PC-9 (cell line): ENCODE measurements at regions of chr2 and their contacts with region 1.

Region 1: GRCh38 chr2:66574701-66575624 is 140.0 kb downstream of the MEIS1 start:
- DNase-seq: peak; percentile 41 to 56
- H3K4me3 ChIP-seq: peak overlapping the region; percentile 65; the same call in 1 of the 2 replicates
- H3K27ac ChIP-seq: no peak overlapping the region
- H3K4me1 ChIP-seq: 0 out of 2 replicates have a peak, but pooled peaks cover 19% of the 10 kb centered on the region
- H3K27me3 ChIP-seq: peaks cover 27% of the 10 kb centered on the region; the same call in 1 of the 2 replicates
- CTCF ChIP-seq: peak; percentile 78

Region 2: GRCh38 chr2:65639156-65639864 is 935.7 kb before region 1 on chr2:
- CTCF ChIA-PET with region 1: no interaction called
- POLR2A ChIA-PET with region 1: no interaction called
- intact Hi-C with region 1: loop called (anchors 2 kb)
- DNase-seq: no peak
- H3K4me3 ChIP-seq: no peak overlapping the region
- H3K27ac ChIP-seq: no peak overlapping the region
- H3K4me1 ChIP-seq: no peaks in the 10 kb centered on the region
- H3K27me3 ChIP-seq: no peaks in the 10 kb centered on the region
- CTCF ChIP-seq: no peak

Region 3: DNA sequence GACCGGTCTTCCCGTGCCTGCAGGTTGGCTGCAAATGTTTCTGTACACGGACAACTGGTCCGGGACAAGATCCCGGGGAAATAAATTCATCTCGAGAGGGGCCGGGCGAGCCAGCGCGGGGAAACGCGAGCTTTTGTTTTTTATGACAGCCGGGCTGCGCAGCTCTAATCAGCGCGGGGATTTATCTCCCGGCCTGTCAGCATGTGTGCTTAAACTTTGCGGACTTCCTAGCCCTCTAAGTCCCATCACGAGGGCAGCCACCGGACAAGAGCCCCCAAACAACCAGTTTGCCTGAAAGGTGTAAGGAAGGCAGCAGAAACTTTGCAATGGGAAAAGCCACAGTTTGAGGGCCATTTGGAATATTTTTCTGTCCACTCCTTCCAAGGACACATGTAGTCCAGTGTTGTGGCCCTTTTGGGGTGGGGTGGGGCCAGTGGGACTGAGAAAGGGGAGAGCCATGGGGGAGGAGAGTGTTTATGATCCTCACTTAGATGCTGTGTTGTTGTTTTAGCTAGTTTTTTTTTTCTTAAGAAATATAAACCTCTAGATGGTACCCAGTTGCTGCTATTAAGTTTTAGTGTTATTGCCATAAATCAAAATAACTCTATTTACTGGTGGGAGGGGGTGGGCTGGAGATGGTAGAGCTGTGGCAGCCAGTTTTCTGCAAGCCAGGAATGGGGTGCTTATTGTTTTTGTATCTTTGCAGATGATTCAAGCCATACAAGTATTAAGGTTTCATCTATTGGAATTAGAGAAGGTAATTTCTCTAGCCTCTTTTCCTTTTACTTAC is 134.1 kb before region 1 on chr2:
- CTCF ChIA-PET with region 1: interaction called, 12 read pairs
- POLR2A ChIA-PET with region 1: no interaction called
- intact Hi-C with region 1: no loop called
- DNase-seq: no peak
- H3K4me3 ChIP-seq: no peak overlapping the region
- H3K27ac ChIP-seq: no peak overlapping the region
- H3K4me1 ChIP-seq: peaks cover 13% of the 10 kb centered on the region
- H3K27me3 ChIP-seq: no peaks in the 10 kb centered on the region
- CTCF ChIP-seq: no peak

Region 4: DNA sequence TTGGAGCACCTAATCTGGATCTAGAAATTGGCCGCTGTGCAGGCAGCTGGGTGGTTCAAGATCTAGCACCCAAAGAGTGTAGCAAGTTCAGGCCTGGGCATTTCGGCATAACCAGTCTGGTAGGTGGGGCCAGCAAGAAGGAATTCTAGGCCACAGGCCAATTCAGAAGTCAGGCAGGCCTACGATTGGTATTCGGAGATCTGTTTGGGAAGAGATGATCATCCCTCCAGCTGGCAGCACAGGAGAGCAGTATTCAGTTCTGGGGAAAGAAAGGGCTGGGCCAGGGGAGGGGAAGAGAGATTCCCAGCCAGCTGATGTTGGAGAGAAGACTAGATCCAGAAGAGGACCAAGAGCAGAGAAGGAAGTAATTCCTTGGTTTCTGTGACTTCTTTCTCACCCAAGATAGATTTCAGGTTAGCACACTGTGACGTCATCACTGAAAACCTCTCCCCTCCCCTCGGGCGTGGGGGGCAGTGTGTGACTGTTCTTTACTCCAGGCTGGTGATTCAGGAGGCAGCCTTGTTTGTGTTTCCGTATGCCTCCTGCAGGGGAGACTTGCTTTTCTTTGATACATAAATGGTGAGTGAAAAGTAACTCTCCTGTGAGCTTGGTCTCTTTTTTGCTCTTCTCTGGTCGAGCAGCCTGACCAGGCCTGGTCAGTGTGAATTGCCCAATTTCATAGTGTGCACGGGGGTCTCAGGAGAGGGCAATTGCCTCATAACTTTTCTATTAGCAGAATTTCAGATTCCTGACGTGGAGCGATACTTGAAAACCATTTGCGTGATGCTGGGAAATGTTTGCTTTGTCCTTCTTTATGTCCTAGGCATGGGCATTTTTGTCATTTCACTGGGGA is 78.9 kb before region 1 on chr2:
- CTCF ChIA-PET with region 1: no interaction called
- POLR2A ChIA-PET with region 1: no interaction called
- intact Hi-C with region 1: loop called (anchors 2 kb)
- DNase-seq: peak; percentile 89 to 92
- H3K4me3 ChIP-seq: peak overlapping the region; percentile 32; the same call in 1 of the 2 replicates
- H3K27ac ChIP-seq: peak overlapping the region; percentile 91
- H3K4me1 ChIP-seq: peaks cover 46% of the 10 kb centered on the region
- H3K27me3 ChIP-seq: no peaks in the 10 kb centered on the region
- CTCF ChIP-seq: peak; percentile 55; the same call in 1 of the 2 replicates

Region 5: DNA sequence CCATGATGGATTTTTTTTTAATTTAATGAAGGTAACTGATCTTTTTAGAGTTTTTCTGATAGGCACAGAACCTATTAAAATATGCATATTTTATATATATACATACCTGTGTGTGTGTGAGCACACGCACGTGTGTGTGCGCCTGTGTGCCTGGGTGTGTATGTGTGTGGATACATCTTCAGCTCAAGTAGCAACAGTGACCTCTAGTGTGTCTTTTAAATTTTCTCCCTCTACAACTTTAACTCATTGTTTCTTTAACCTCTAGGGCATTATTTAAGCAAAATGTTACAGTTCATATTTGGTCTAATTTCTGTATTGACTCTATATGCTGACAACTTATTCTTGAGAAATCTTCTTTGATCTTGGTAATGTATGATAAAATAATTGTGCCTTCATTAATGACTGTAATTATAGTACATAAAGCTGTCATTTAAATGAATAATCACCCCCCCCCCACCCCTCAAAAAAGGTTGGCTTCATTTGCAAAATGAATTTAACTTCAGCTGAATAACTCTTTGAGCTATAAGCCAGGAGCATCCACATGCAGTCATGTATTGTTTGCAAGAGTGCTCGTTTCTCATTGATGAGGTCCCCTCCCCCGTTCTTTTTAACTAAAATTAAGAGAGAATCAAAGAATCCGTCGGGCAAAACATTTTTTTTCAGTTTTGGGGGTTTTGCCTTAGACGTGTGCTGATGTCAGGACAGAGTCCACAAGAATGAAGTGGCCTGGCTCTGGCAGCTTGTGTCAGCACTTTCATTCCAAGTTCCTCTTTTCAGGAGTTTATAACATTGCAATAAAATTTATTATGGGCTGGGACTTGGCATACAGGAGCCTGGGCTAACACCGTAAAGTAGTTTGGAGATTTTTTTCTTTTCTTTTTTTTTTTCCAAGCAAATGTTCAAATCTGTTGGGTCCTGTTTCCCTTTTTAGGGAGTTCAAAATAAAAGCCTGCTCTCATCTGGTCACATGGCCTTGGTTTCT is 902.1 kb after region 1 on chr2:
- CTCF ChIA-PET with region 1: no interaction called
- POLR2A ChIA-PET with region 1: no interaction called
- intact Hi-C with region 1: loop called (anchors 10 kb)
- DNase-seq: peak in 1 of 2 experiments; percentile 50
- H3K4me3 ChIP-seq: no peak overlapping the region
- H3K27ac ChIP-seq: no peak overlapping the region
- H3K4me1 ChIP-seq: no peaks in the 10 kb centered on the region
- H3K27me3 ChIP-seq: no peaks in the 10 kb centered on the region
- CTCF ChIP-seq: peak; percentile 84

Region 6: GRCh38 chr2:67840460-67841068 is 1265.6 kb after region 1 on chr2:
- CTCF ChIA-PET with region 1: no interaction called
- POLR2A ChIA-PET with region 1: no interaction called
- intact Hi-C with region 1: loop called (anchors 5 kb)
- DNase-seq: peak in 1 of 2 experiments; percentile 65
- H3K4me3 ChIP-seq: no peak overlapping the region
- H3K27ac ChIP-seq: no peak overlapping the region
- H3K4me1 ChIP-seq: no peaks in the 10 kb centered on the region
- H3K27me3 ChIP-seq: 0 out of 2 replicates have a peak, but pooled peaks cover 4% of the 10 kb centered on the region
- CTCF ChIP-seq: peak; percentile 75